A549 (cell line): ENCODE measurements at regions of chr5 and their contacts with region 1.

Region 1: DNA sequence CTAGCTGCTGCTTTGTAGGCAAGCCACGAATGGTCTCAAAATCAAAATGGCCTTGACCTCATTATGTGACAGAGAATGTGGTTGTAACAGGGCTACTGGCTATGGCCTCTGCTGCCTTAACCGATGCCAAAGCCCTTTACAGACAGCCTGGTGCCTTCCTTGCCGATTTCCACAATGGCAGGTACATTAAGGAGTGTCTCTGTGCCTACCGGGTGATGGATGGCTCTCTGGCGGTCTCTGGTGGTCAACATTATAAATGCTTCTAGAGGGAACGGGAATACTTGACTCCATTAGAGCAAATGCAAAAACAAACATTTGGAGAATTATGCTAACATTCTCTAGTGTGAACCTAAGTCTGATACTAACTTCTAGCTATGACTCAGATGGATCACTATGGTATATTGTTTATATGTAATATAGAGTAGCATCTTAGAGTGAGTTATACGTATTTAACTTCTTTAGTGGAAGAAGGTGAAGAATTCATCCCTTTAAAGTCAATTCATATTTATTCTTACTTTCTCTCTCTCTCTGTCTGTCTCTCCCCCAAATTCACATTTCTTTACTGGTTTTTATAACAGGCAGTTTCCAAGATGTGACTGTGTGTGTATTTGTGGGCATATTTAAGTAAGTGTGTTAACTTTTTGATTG is 52.5 kb downstream of the RPS23 start:
- DNase-seq: peak; percentile 41 to 62
- ATAC-seq: peak; percentile 93 to 98
- H3K4me3 ChIP-seq: no peak overlapping the region
- H3K27ac ChIP-seq: no peak overlapping the region
- H3K4me1 ChIP-seq: no peaks in the 10 kb centered on the region
- CTCF ChIP-seq: peak; percentile 90
- EP300 ChIP-seq: no peak
- POLR2A ChIP-seq: no peak
- RAD21 ChIP-seq: peak; percentile 87 to 93

Region 2: DNA sequence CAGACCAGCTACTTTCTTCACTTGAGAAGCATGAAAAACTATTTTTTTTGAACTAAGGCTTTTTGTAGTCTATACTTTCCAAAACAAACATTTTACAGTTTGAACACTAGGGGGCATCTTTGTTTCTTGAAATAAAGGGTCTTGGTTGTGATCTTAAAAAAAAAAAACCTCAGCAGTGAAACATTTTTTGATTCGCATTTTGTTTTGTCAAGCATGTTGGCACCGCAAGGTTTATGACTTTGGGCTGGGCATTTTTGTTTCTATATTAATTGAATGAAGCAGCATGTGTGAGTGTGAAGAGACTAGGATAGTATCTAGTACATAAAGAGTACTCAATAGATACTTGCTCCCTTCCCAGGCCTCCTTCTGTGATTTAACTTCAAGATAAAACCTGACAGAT is 800.1 kb before region 1 on chr5:
- CTCF ChIA-PET with region 1: interaction called, 26 read pairs
- POLR2A ChIA-PET with region 1: no interaction called
- DNase-seq: peak; percentile 8 to 40
- ATAC-seq: peak in 1 of 2 experiments; percentile 68; a peak in 4 of 6 replicates
- H3K4me3 ChIP-seq: no peak overlapping the region
- H3K27ac ChIP-seq: no peak overlapping the region
- H3K4me1 ChIP-seq: peaks cover 45% of the 10 kb centered on the region
- CTCF ChIP-seq: peak; percentile 75
- EP300 ChIP-seq: no peak
- POLR2A ChIP-seq: no peak
- RAD21 ChIP-seq: peak; percentile 64 to 79

Region 3: GRCh38 chr5:81506900-81507588 is 718.6 kb before region 1 on chr5:
- CTCF ChIA-PET with region 1: interaction called, 13 read pairs
- POLR2A ChIA-PET with region 1: no interaction called
- DNase-seq: peak; percentile 66 to 88
- ATAC-seq: peak; percentile 99 to 100
- H3K4me3 ChIP-seq: no peak overlapping the region
- H3K27ac ChIP-seq: no peak overlapping the region; a peak in 1 of 6 replicates
- H3K4me1 ChIP-seq: peaks cover 6% of the 10 kb centered on the region; the same call in 2 of the 3 replicates
- CTCF ChIP-seq: peak; percentile 93
- EP300 ChIP-seq: no peak
- POLR2A ChIP-seq: no peak
- RAD21 ChIP-seq: peak; percentile 92 to 93

Region 4: DNA sequence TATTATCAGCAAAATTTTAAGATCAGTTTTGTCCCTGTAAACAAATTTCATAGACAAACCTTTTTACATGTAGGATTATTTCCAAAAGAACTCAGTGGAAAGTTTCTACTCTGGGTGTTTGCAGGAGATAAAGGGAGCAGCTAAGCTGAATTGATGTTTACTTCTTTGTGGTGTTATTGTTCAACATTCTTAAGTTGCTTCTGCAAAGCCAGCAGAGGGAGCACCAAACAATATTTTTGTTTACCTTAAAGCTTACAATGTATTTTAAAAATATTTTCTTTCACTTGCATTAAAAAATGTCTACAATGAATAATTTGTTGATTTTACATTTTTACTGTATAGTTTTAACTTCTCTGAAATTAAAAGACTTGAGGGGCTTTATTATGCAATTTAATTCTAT is 118.4 kb before region 1 on chr5:
- CTCF ChIA-PET with region 1: interaction called, 10 read pairs
- POLR2A ChIA-PET with region 1: no interaction called
- DNase-seq: peak; percentile 3 to 40
- ATAC-seq: peak in 1 of 2 experiments; percentile 52; a peak in 1 of 6 replicates
- H3K4me3 ChIP-seq: no peak overlapping the region
- H3K27ac ChIP-seq: no peak overlapping the region
- H3K4me1 ChIP-seq: peaks cover 32% of the 10 kb centered on the region
- CTCF ChIP-seq: peak; percentile 63
- EP300 ChIP-seq: no peak
- POLR2A ChIP-seq: no peak
- RAD21 ChIP-seq: peak; percentile 61 to 69

Region 5: DNA sequence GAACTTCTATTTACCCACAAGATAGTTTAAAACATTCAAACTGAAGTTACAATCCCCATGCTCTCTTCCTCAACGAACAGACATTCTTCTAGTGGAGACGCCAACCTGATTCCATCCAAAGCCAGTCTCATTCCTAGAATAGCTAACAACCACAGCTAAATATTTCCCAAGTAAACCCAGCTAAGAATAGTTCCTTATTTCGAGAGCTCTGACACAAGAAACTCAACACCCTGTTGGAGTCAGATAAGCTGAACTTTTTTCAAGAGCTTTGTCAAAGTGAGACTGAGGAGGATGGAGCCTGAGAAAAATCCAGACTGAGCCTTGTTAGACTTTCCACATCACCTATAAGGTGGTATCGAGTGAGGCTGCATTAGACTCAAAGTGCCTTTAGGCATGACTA is 109.2 kb after region 1 on chr5:
- CTCF ChIA-PET with region 1: no interaction called
- POLR2A ChIA-PET with region 1: no interaction called
- DNase-seq: no peak
- ATAC-seq: no peak
- H3K4me3 ChIP-seq: no peak overlapping the region
- H3K27ac ChIP-seq: no peak overlapping the region
- H3K4me1 ChIP-seq: no peaks in the 10 kb centered on the region
- CTCF ChIP-seq: no peak
- EP300 ChIP-seq: no peak
- POLR2A ChIP-seq: no peak
- RAD21 ChIP-seq: no peak

Region 6: DNA sequence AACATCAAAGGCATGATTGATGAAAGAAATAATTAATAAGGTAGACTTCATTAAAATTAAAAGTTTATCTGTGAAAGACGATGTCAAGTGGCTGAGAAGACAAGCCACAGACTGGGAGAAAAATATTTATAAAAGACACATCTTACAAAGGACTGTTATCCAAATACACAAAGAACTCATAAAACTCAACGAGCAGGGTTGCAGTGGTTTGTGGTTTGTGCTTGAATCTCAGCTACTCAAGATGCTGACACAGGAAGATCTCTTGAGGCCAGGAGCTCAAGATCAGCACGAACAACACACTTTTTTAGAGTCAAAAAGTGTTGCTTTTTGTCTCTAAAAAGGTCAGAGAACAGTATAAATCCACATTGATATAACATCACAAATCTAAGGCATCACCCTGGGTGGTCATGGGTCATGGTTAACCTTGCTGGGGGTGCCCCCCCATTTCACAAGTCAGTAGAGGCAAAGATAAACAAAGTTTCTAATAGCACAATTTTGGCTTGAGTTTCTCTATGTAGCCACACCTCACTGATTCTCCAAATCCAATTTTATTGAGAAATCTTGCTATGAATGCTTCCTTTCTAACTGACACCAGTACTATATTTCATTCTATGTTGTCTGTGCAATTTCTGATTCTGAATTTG is 395.4 kb after region 1 on chr5:
- CTCF ChIA-PET with region 1: no interaction called
- POLR2A ChIA-PET with region 1: no interaction called
- DNase-seq: no peak
- ATAC-seq: no peak
- H3K4me3 ChIP-seq: no peak overlapping the region
- H3K27ac ChIP-seq: no peak overlapping the region
- H3K4me1 ChIP-seq: no peaks in the 10 kb centered on the region
- CTCF ChIP-seq: no peak
- EP300 ChIP-seq: no peak
- POLR2A ChIP-seq: no peak
- RAD21 ChIP-seq: no peak